MCF 10A (cell line): ENCODE measurements at regions of chr12 and their contacts with region 1.

Region 1: DNA sequence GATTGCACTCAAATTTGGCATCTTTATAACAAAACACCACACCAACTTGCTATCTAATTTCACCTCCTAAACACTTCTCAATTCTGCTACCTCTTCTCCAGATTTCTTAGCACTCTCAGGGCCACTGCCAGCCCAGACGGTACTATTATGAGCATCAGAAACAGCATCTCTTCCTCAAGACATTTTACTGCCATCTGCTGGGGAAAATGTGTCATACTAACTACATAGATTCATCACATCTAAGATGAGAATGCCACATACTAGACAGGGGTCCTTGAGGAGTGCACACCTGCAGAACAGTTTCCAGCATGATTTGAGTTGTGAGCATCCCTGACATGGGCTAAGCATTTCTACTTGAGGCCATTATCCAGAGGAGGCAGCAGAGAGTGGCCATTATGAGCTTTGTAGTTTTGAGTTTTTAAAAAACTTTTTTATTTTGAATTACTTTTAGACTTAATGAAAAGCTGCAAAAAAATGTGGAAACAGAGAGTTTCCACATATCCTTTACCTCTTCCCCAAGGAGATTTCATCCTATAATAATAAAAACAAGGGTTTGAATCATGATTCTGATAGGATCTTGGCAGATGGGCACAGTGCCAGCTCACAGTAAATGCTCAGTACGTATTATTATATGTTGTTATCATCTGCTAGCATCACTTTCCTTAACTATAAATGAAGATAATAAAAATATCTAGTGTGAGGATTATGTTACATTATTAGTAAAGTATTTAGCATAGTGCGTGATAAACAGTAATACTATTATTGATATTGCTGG is 15.2 kb upstream of the GRIP1 start:
- DNase-seq: peak; percentile 75
- H3K4me3 Mint-ChIP-seq: no peak overlapping the region
- H3K27ac Mint-ChIP-seq: no peak overlapping the region
- H3K4me1 Mint-ChIP-seq: no peaks in the 10 kb centered on the region
- H3K27me3 Mint-ChIP-seq: peaks cover 34% of the 10 kb centered on the region
- CTCF ChIP-seq: peak; percentile 68

Region 2: DNA sequence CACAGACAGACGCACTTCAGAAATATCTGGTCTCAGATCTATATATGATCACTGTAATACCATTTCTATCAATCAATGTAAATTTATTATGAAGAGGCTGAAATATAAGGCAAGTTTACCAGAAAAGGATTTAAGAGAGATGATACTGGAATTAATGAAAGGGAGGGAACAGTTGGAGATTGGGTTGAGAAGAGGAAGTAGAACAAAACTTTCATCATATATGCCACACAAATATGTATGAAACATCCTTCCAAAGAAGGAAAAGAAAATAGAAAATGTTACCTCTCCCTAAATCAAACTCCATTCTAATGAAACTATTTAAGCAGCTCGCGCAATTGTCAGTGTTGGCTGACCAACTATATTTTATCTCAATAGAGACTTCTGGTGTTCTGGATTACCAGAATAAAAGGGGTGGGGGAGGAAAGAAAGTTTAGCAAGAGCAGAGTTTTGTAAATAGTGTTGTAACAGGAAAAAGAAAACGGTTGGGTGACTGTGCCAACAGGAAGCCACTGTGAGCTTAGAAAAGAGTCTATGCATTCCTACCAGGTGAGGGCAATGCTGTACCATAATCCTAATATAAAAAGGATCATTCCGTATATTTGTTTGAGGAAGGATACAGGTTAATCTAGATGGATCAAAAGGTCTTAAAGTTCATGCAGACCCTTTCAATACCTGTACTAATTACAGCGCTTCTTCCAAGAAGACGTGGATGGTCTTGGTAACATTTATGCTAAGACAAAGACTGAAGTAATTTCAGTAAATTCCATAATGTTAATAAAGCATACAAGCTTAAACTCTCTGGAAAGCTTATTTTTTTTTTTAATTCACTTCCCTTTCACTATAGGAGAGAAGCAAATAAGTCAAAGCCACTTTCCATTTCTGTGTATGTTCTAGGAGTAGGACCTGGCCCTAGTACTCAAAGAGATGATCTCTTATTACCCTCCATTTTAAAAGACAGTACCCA is 549.0 kb before region 1 on chr12:
- CTCF ChIA-PET with region 1: interaction called, 13 read pairs
- POLR2A ChIA-PET with region 1: no interaction called
- intact Hi-C with region 1: loop called (anchors 5 kb)
- DNase-seq: peak; percentile 84
- H3K4me3 Mint-ChIP-seq: no peak overlapping the region
- H3K27ac Mint-ChIP-seq: peak overlapping the region; percentile 82
- H3K4me1 Mint-ChIP-seq: peaks cover 8% of the 10 kb centered on the region
- H3K27me3 Mint-ChIP-seq: no peaks in the 10 kb centered on the region
- CTCF ChIP-seq: peak; percentile 59

Region 3: GRCh38 chr12:66279123-66279712 is 414.9 kb before region 1 on chr12:
- CTCF ChIA-PET with region 1: interaction called, 3 read pairs
- POLR2A ChIA-PET with region 1: no interaction called
- intact Hi-C with region 1: loop called (anchors 2 kb)
- DNase-seq: peak; percentile 41
- H3K4me3 Mint-ChIP-seq: no peak overlapping the region
- H3K27ac Mint-ChIP-seq: no peak overlapping the region
- H3K4me1 Mint-ChIP-seq: no peaks in the 10 kb centered on the region
- H3K27me3 Mint-ChIP-seq: peaks cover 36% of the 10 kb centered on the region
- CTCF ChIP-seq: peak; percentile 36

Region 4: GRCh38 chr12:66409195-66409871 is 284.8 kb before region 1 on chr12:
- CTCF ChIA-PET with region 1: no interaction called
- POLR2A ChIA-PET with region 1: no interaction called
- intact Hi-C with region 1: loop called (anchors 5 kb)
- DNase-seq: peak; percentile 53
- H3K4me3 Mint-ChIP-seq: no peak overlapping the region
- H3K27ac Mint-ChIP-seq: no peak overlapping the region
- H3K4me1 Mint-ChIP-seq: peaks cover 6% of the 10 kb centered on the region
- H3K27me3 Mint-ChIP-seq: no peaks in the 10 kb centered on the region
- CTCF ChIP-seq: peak; percentile 75

Region 5: DNA sequence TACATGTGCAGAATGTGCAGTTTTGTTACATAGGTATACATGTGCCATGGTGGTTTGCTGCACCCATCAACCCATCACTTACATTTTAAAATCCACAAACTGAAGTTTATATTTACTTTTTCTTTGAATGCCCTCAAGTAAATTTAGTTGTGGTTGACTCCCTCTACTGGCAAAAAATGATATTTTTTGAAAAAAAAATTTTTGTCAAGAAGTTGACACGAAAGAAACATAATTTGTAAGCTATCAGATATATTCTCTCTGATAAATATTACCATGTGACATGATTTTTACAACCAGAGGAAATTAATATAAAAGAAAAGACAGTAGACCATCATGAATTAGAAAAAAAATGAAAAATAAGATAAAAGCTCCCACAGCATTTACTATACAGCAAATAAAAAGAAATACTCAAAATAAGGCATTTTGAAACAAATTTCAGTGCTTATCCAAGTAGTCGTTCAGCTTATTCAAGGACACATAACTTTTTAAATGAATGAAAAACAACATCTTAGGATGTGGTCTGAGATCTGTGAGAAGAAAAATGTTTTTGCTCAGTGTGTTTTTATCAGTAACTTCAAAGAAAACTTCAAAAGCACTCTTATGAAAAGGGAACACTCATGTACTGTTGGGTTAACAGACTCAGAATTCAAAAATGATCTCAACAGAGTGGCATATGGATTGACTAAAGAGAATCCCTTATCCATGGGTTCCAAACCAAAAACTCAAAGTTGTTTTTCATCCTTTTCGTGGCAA is 14.8 kb after region 1 on chr12:
- CTCF ChIA-PET with region 1: interaction called, 21 read pairs
- POLR2A ChIA-PET with region 1: no interaction called
- intact Hi-C with region 1: no loop called
- DNase-seq: peak; percentile 16
- H3K4me3 Mint-ChIP-seq: no peak overlapping the region
- H3K27ac Mint-ChIP-seq: no peak overlapping the region
- H3K4me1 Mint-ChIP-seq: no peaks in the 10 kb centered on the region
- H3K27me3 Mint-ChIP-seq: peaks cover 41% of the 10 kb centered on the region
- CTCF ChIP-seq: peak; percentile 34

Region 6: GRCh38 chr12:66786531-66787308 is 92.6 kb after region 1 on chr12:
- CTCF ChIA-PET with region 1: no interaction called
- POLR2A ChIA-PET with region 1: no interaction called
- intact Hi-C with region 1: no loop called
- DNase-seq: no peak
- H3K4me3 Mint-ChIP-seq: no peak overlapping the region
- H3K27ac Mint-ChIP-seq: no peak overlapping the region
- H3K4me1 Mint-ChIP-seq: no peaks in the 10 kb centered on the region
- H3K27me3 Mint-ChIP-seq: peaks cover 19% of the 10 kb centered on the region
- CTCF ChIP-seq: no peak